ENCODE measurements at regions of chr7 and their contacts with region 1.

Region 1: DNA sequence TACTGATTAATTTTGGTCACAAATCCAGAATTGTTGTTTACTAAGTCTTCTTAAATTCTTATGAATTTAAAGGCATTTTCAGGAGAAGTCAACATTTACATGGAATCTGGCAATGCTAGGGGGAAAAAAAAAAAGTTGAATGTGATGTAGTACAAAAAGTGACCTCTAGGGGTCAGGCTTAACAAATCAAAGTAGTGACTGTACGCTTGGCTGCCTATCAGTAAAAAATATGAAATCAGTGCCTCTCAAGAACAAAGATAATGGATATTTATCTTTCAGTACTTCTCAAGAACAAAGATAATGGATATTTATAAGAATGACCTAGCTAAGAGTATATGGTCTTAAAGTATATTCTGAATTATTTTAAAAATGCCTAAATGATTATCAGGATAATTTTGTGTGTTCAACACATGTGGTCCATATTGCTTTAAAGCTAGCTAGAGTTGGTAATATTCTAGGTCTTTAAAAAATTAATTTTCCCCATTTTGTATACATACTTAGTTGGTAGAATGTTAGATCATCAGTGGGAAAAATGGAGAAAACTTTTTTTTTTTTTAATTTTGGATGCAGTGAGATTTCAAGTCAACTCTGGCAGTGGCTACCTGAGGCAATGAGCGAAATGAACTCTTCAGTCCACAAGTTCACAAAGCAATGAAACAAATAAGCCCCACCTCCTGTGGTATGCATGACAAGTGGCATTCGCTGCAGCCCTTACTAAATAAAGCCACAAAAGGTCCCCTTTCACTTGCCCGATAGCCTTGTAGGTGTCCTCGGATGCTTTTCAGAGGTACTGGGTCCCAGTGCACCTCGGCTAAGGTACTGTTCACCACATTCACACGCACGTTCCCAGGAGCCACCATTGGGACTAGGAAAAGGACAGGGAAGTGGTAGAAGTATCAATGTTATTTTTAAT is 51.2 kb upstream of the LAMB4 start:
- DNase-seq: peak; percentile 43
- ATAC-seq: peak; percentile 69
- H3K4me3 ChIP-seq: no peak overlapping the region
- H3K27ac ChIP-seq: no peak overlapping the region
- H3K4me1 ChIP-seq: no peaks in the 10 kb centered on the region
- H3K27me3 ChIP-seq: no peaks in the 10 kb centered on the region
- CTCF ChIP-seq: peak; percentile 72
- EP300 ChIP-seq: no peak
- POLR2A ChIP-seq: no peak
- RAD21 ChIP-seq: no peak

Region 2: GRCh38 chr7:108094933-108095710 is 86.2 kb before region 1 on chr7:
- CTCF ChIA-PET with region 1: no interaction called
- POLR2A ChIA-PET with region 1: no interaction called
- in situ Hi-C with region 1: no loop called
- intact Hi-C with region 1: no loop called
- DNase-seq: peak; percentile 88
- ATAC-seq: peak; percentile 96
- H3K4me3 ChIP-seq: peak overlapping the region in 1 of 3 experiments; percentile 24; a peak in 1 of 6 replicates
- H3K27ac ChIP-seq: no peak overlapping the region
- H3K4me1 ChIP-seq: peaks cover 49% of the 10 kb centered on the region
- H3K27me3 ChIP-seq: no peaks in the 10 kb centered on the region
- CTCF ChIP-seq: no peak
- EP300 ChIP-seq: peak in 1 of 2 experiments; percentile 56; a peak in 2 of 4 replicates
- POLR2A ChIP-seq: no peak
- RAD21 ChIP-seq: no peak

Region 3: DNA sequence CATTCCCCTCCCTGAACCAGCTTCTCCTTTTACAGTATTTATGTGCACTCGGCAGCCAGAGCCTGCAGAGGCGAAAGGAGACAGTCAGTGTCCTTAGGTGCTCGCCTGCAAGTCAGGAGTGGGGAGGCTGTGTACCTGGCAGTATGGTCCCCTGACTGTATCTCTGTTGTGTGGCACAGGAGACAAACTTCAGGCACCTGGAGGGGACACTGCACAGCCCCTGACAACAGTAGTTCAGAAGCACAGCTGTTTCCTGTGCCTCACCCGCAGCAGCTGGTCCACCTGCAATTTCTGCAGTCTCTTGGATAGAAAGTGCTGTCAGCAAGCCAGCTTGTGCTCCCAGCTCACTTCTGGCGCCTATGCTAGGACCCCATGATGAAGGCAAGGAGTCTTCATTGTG is 22.2 kb after region 1 on chr7:
- CTCF ChIA-PET with region 1: no interaction called
- POLR2A ChIA-PET with region 1: no interaction called
- in situ Hi-C with region 1: no loop called
- intact Hi-C with region 1: no loop called
- DNase-seq: no peak
- ATAC-seq: no peak
- H3K4me3 ChIP-seq: no peak overlapping the region
- H3K27ac ChIP-seq: no peak overlapping the region
- H3K4me1 ChIP-seq: peaks cover 2% of the 10 kb centered on the region; the same call in 1 of the 2 replicates
- H3K27me3 ChIP-seq: no peaks in the 10 kb centered on the region
- CTCF ChIP-seq: no peak
- EP300 ChIP-seq: no peak
- POLR2A ChIP-seq: no peak
- RAD21 ChIP-seq: no peak

Region 4: GRCh38 chr7:108384721-108385481 is 203.6 kb after region 1 on chr7:
- CTCF ChIA-PET with region 1: no interaction called
- POLR2A ChIA-PET with region 1: no interaction called
- in situ Hi-C with region 1: no loop called
- intact Hi-C with region 1: loop called (anchors 10 kb)
- DNase-seq: no peak
- ATAC-seq: peak; percentile 89
- H3K4me3 ChIP-seq: no peak overlapping the region
- H3K27ac ChIP-seq: no peak overlapping the region
- H3K4me1 ChIP-seq: no peaks in the 10 kb centered on the region
- H3K27me3 ChIP-seq: no peaks in the 10 kb centered on the region; a peak in 1 of 5 replicates
- CTCF ChIP-seq: peak; percentile 32
- EP300 ChIP-seq: no peak
- POLR2A ChIP-seq: no peak
- RAD21 ChIP-seq: no peak

Region 5: GRCh38 chr7:108459931-108460551 is 278.7 kb after region 1 on chr7:
- CTCF ChIA-PET with region 1: interaction called, 15 read pairs
- POLR2A ChIA-PET with region 1: no interaction called
- in situ Hi-C with region 1: loop called (anchors 10 kb)
- intact Hi-C with region 1: loop called (anchors 1 kb)
- DNase-seq: peak; percentile 38
- ATAC-seq: peak; percentile 62
- H3K4me3 ChIP-seq: no peak overlapping the region
- H3K27ac ChIP-seq: no peak overlapping the region
- H3K4me1 ChIP-seq: no peaks in the 10 kb centered on the region
- H3K27me3 ChIP-seq: peaks cover 4 to 34% of the 10 kb centered on the region in 2 experiments
- CTCF ChIP-seq: peak; percentile 71
- EP300 ChIP-seq: no peak
- POLR2A ChIP-seq: no peak
- RAD21 ChIP-seq: peak; percentile 52

Region 6: DNA sequence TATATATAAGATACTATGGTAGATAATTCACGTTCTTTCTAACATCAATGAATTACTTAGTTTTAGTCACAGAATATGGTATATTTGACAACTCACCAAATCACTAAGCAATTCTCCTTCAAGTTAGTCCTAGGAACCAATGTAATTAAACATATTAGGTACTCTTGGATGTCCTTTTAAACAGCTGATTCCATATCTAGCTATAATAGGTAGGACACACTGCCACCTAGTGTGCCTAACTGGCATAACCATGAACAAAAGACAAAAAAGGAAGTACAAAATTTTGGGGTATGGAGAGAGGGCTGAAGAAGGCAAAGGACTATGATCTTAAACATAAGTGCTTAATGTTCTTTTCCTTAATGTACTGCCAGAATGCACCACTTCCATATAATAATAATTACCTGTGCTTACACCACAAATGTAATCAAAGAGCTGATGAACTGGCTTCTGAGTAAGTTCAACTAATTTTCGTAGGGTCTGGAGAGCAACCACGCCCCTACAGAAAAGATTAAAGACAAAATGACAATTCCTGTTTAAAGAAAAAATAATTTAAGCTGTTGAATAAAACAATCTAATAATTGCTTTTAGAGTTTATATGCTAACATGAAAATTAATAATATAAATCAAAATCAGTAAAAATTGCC is 315.9 kb after region 1 on chr7:
- CTCF ChIA-PET with region 1: interaction called, 31 read pairs
- POLR2A ChIA-PET with region 1: no interaction called
- in situ Hi-C with region 1: no loop called
- intact Hi-C with region 1: loop called (anchors 1 kb)
- DNase-seq: peak; percentile 52
- ATAC-seq: no peak; the same call in 2 of the 3 replicates
- H3K4me3 ChIP-seq: no peak overlapping the region
- H3K27ac ChIP-seq: no peak overlapping the region
- H3K4me1 ChIP-seq: no peaks in the 10 kb centered on the region
- H3K27me3 ChIP-seq: no peaks in the 10 kb centered on the region
- CTCF ChIP-seq: peak; percentile 84
- EP300 ChIP-seq: no peak
- POLR2A ChIP-seq: no peak
- RAD21 ChIP-seq: peak; percentile 48; the same call in 1 of the 2 replicates